ENCODE measurements at regions of chr16 and their contacts with region 1.

Region 1: GRCh38 chr16:67279296-67280089 is at the start of gene PLEKHG4:
- DNase-seq: peak; percentile 13
- ATAC-seq: peak; percentile 93
- H3K4me3 ChIP-seq: peak within 1 kb of the TSS; percentile 74
- H3K27ac ChIP-seq: peak within 1 kb of the TSS; percentile 6
- H3K4me1 ChIP-seq: peaks cover 4% of the 10 kb centered on the region; the same call in 1 of the 2 replicates
- H3K27me3 ChIP-seq: no peaks in the 10 kb centered on the region
- CTCF ChIP-seq: peak; percentile 65 to 87 (median 72); a peak in 5 of 6 replicates
- EP300 ChIP-seq: no peak
- POLR2A ChIP-seq: peak; percentile 67; the same call in 1 of the 2 replicates
- RAD21 ChIP-seq: peak; percentile 82
- polyA plus RNA-seq, gene PLEKHG4: 0.14 to 0.24 TPM

Region 2: GRCh38 chr16:67115639-67116038 is 163.9 kb before region 1 on chr16:
- CTCF ChIA-PET with region 1: no interaction called
- POLR2A ChIA-PET with region 1: no interaction called
- RAD21 ChIA-PET with region 1: no interaction called
- SMC1A ChIA-PET with region 1: no interaction called
- in situ Hi-C with region 1: no loop called
- intact Hi-C with region 1: no loop called
- DNase-seq: no peak
- ATAC-seq: no peak
- H3K4me3 ChIP-seq: no peak overlapping the region
- H3K27ac ChIP-seq: no peak overlapping the region
- H3K4me1 ChIP-seq: peaks cover 3% of the 10 kb centered on the region; the same call in 1 of the 2 replicates
- H3K27me3 ChIP-seq: no peaks in the 10 kb centered on the region
- CTCF ChIP-seq: no peak
- EP300 ChIP-seq: no peak
- POLR2A ChIP-seq: no peak
- RAD21 ChIP-seq: no peak

Region 3: GRCh38 chr16:67260426-67261075 is 18.9 kb before region 1 on chr16:
- CTCF ChIA-PET with region 1: interaction called, 22 read pairs
- POLR2A ChIA-PET with region 1: no interaction called
- RAD21 ChIA-PET with region 1: interaction called, 4 read pairs
- SMC1A ChIA-PET with region 1: interaction called, 16 read pairs
- in situ Hi-C with region 1: no loop called
- intact Hi-C with region 1: no loop called
- DNase-seq: no peak
- ATAC-seq: peak; percentile 88
- H3K4me3 ChIP-seq: no peak overlapping the region
- H3K27ac ChIP-seq: no peak overlapping the region
- H3K4me1 ChIP-seq: no peaks in the 10 kb centered on the region
- H3K27me3 ChIP-seq: no peaks in the 10 kb centered on the region
- CTCF ChIP-seq: peak; percentile 77 to 81 (median 80)
- EP300 ChIP-seq: no peak
- POLR2A ChIP-seq: no peak
- RAD21 ChIP-seq: peak; percentile 94

Region 4: DNA sequence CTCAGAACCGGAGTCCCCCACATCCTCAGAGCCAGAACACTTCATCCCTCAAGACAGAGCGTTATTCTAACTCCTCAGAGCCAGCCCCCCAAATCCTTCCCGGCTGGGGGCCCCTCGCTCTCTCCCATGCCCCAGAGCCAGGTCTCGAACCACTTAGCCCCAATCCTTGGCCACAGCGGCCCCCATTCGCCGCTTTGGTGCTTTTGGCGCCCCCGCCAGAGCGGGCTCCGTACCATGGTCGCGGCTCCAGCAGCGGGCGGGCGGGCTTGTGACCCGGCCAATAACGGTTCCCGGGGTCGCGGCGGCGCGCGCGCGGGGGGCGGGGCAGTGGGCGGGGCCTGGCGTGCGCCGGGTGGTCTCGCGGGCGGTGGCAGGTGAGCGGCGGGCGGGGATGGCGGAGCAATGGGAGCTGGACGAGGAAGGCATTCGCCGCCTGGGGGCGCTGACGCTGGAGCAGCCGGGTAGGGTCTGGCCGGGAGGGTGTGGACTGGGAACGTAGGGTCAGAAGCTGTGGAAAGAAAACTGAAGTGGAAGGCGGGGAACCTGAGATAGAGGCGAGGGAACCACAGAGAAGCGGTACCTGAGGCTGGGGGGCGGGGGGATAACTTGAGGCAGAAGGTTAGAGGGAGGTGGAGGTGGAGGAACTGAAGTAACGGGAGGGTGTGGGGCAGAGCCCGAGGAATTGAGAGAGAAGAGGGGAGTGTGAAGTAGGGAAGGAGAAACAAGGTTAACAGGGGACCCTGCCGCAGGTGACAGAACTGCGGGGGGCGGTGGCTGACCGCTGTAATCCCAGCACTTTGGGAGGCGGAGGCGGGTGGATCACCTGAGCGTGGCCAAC is 47.2 kb after region 1 on chr16 and contains the starts of genes KCTD19 and LRRC36:
- CTCF ChIA-PET with region 1: interaction called, 7 read pairs
- POLR2A ChIA-PET with region 1: no interaction called
- RAD21 ChIA-PET with region 1: interaction called, 3 read pairs
- SMC1A ChIA-PET with region 1: interaction called, 6 read pairs
- in situ Hi-C with region 1: no loop called
- intact Hi-C with region 1: loop called (anchors 5 kb)
- DNase-seq: no peak
- ATAC-seq: peak; percentile 72
- H3K4me3 ChIP-seq: peak within 1 kb of the TSS; percentile 74
- H3K27ac ChIP-seq: peak within 1 kb of the TSS; percentile 29; the same call in 1 of the 2 replicates
- H3K4me1 ChIP-seq: peaks cover 22% of the 10 kb centered on the region
- H3K27me3 ChIP-seq: no peaks in the 10 kb centered on the region; a peak in 1 of 4 replicates
- CTCF ChIP-seq: peak; percentile 31 to 51 (median 46)
- EP300 ChIP-seq: no peak
- POLR2A ChIP-seq: peak; percentile 40; the same call in 1 of the 2 replicates
- RAD21 ChIP-seq: no peak
- polyA plus RNA-seq, gene KCTD19: 1.6 to 2.5 TPM
- polyA plus RNA-seq, gene LRRC36: 0.69 to 0.79 TPM

Region 5: GRCh38 chr16:67339453-67339852 is 60.0 kb after region 1 on chr16:
- CTCF ChIA-PET with region 1: interaction called, 23 read pairs
- POLR2A ChIA-PET with region 1: interaction called, 3 read pairs
- RAD21 ChIA-PET with region 1: interaction called, 9 read pairs
- SMC1A ChIA-PET with region 1: interaction called, 6 read pairs
- in situ Hi-C with region 1: no loop called
- intact Hi-C with region 1: loop called (anchors 1 kb)
- DNase-seq: no peak
- ATAC-seq: peak; percentile 75
- H3K4me3 ChIP-seq: no peak overlapping the region
- H3K27ac ChIP-seq: no peak overlapping the region
- H3K4me1 ChIP-seq: no peaks in the 10 kb centered on the region
- H3K27me3 ChIP-seq: no peaks in the 10 kb centered on the region
- CTCF ChIP-seq: peak; percentile 23 to 51 (median 25); a peak in 4 of 6 replicates
- EP300 ChIP-seq: no peak
- POLR2A ChIP-seq: no peak
- RAD21 ChIP-seq: peak; percentile 68

Region 6: GRCh38 chr16:67399181-67399733 is 119.8 kb after region 1 on chr16:
- CTCF ChIA-PET with region 1: interaction called, 3 read pairs
- POLR2A ChIA-PET with region 1: no interaction called
- RAD21 ChIA-PET with region 1: interaction called, 3 read pairs
- SMC1A ChIA-PET with region 1: no interaction called
- in situ Hi-C with region 1: no loop called
- intact Hi-C with region 1: loop called (anchors 5 kb)
- DNase-seq: no peak
- ATAC-seq: peak; percentile 85
- H3K4me3 ChIP-seq: no peak overlapping the region
- H3K27ac ChIP-seq: no peak overlapping the region
- H3K4me1 ChIP-seq: no peaks in the 10 kb centered on the region
- H3K27me3 ChIP-seq: peaks cover 1 to 6% of the 10 kb centered on the region in 2 experiments
- CTCF ChIP-seq: peak; percentile 67 to 80 (median 71)
- EP300 ChIP-seq: no peak
- POLR2A ChIP-seq: no peak
- RAD21 ChIP-seq: peak; percentile 74

Region 7: GRCh38 chr16:67504041-67505021 is 224.8 kb after region 1 on chr16:
- CTCF ChIA-PET with region 1: no interaction called
- POLR2A ChIA-PET with region 1: no interaction called
- RAD21 ChIA-PET with region 1: no interaction called
- SMC1A ChIA-PET with region 1: no interaction called
- in situ Hi-C with region 1: no loop called
- intact Hi-C with region 1: no loop called
- DNase-seq: no peak
- ATAC-seq: peak; percentile 25; the same call in 2 of the 3 replicates
- H3K4me3 ChIP-seq: no peak overlapping the region
- H3K27ac ChIP-seq: no peak overlapping the region
- H3K4me1 ChIP-seq: peaks cover 15% of the 10 kb centered on the region
- H3K27me3 ChIP-seq: no peaks in the 10 kb centered on the region
- CTCF ChIP-seq: no peak
- EP300 ChIP-seq: no peak
- POLR2A ChIP-seq: no peak
- RAD21 ChIP-seq: no peak